PC-9 (cell line): ENCODE measurements at regions of chr14 and their contacts with region 1.

Region 1: DNA sequence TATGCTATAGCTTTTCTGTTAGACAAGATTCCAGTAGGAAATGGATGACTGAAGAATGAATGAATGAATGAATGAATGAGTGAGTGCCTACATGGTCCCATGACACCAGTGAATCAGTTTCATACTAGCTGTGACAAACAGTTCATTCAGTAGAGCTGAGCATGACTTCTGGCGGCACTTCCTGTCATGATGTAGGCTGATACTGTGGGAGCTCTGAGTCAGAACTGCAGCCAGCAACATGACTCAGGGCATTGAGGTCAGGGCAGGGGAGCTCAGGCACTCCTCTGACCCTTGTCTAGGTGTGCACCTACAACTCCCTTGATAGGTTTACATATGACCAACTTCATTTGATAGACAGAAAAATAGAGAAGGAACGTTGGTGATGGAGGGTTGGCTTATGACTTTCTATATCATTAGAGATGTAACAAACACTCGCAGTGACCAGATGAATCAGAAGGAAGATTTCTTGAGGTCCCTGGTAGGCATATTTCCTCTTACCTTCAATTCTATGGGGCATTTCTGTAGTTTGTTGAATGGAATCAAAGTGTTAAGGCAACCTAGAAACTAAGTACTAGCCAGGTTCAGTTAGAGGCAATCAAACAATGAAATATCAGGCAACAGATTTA is 139.3 kb upstream of the ARHGAP5 start:
- DNase-seq: peak; percentile 64 to 89
- H3K4me3 ChIP-seq: no peak overlapping the region
- H3K27ac ChIP-seq: peak overlapping the region; percentile 91
- H3K4me1 ChIP-seq: peaks cover 14% of the 10 kb centered on the region
- H3K27me3 ChIP-seq: no peaks in the 10 kb centered on the region
- CTCF ChIP-seq: no peak

Region 2: DNA sequence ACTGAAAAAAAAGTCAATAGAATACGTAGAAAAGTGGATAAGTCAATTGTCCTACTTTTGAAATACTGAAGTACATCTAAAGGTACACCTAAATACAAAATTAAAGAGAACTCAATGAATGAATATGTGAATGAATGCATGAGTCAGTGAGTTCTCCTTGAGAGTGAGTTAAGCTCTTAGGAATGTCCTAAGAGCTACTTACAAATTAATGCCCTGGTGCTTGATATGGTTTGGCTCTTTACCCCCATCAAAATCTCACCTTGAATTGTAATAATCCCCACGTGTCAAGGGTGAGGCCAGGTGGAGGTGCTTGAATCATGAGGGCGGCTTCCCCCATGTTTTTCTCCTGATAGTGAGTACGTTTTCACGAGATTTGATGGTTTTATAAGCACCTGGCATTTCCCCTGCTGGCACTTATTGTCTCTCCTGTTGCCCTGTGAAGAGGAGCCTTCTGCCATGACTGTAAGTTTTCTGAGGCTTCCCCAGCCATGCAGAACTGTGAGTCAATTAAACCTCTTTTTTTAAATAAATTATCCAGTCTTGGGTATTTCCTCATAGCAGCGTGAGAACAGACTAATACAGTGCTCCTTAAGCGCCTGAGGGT is 53.0 kb before region 1 on chr14:
- CTCF ChIA-PET with region 1: no interaction called
- POLR2A ChIA-PET with region 1: no interaction called
- intact Hi-C with region 1: no loop called
- DNase-seq: peak; percentile 16 to 52
- H3K4me3 ChIP-seq: no peak overlapping the region
- H3K27ac ChIP-seq: no peak overlapping the region
- H3K4me1 ChIP-seq: peaks cover 4% of the 10 kb centered on the region; the same call in 1 of the 2 replicates
- H3K27me3 ChIP-seq: no peaks in the 10 kb centered on the region
- CTCF ChIP-seq: no peak

Region 3: GRCh38 chr14:32076278-32077080 is 138.6 kb after region 1 on chr14:
- CTCF ChIA-PET with region 1: no interaction called
- POLR2A ChIA-PET with region 1: no interaction called
- intact Hi-C with region 1: no loop called
- DNase-seq: peak; percentile 75 to 91
- H3K4me3 ChIP-seq: peak overlapping the region; percentile 78
- H3K27ac ChIP-seq: peak overlapping the region; percentile 98
- H3K4me1 ChIP-seq: peaks cover 26% of the 10 kb centered on the region
- H3K27me3 ChIP-seq: no peaks in the 10 kb centered on the region
- CTCF ChIP-seq: no peak

Region 4: GRCh38 chr14:32560209-32560857 is 622.5 kb after region 1 on chr14:
- CTCF ChIA-PET with region 1: no interaction called
- POLR2A ChIA-PET with region 1: no interaction called
- intact Hi-C with region 1: loop called (anchors 10 kb)
- DNase-seq: peak; percentile 45 to 47
- H3K4me3 ChIP-seq: no peak overlapping the region
- H3K27ac ChIP-seq: no peak overlapping the region
- H3K4me1 ChIP-seq: no peaks in the 10 kb centered on the region
- H3K27me3 ChIP-seq: no peaks in the 10 kb centered on the region
- CTCF ChIP-seq: peak; percentile 90